BJ (cell line): ENCODE measurements at regions of chr2 and their contacts with region 1.

Region 1: GRCh38 chr2:164913640-164914350 is 41.5 kb downstream of the SLC38A11 start:
- DNase-seq: no peak
- H3K4me3 ChIP-seq: no peak overlapping the region
- H3K27me3 ChIP-seq: no peaks in the 10 kb centered on the region
- CTCF ChIP-seq: peak; percentile 33; the same call in 1 of the 2 replicates

Region 2: GRCh38 chr2:164903204-164903603 is 10.6 kb before region 1 on chr2:
- CTCF ChIA-PET with region 1: interaction called, 10 read pairs
- POLR2A ChIA-PET with region 1: interaction called, 3 read pairs
- DNase-seq: no peak
- H3K4me3 ChIP-seq: no peak overlapping the region
- H3K27me3 ChIP-seq: no peaks in the 10 kb centered on the region
- CTCF ChIP-seq: no peak